ENCODE measurements at regions of chr6 and their contacts with region 1.

Region 1: DNA sequence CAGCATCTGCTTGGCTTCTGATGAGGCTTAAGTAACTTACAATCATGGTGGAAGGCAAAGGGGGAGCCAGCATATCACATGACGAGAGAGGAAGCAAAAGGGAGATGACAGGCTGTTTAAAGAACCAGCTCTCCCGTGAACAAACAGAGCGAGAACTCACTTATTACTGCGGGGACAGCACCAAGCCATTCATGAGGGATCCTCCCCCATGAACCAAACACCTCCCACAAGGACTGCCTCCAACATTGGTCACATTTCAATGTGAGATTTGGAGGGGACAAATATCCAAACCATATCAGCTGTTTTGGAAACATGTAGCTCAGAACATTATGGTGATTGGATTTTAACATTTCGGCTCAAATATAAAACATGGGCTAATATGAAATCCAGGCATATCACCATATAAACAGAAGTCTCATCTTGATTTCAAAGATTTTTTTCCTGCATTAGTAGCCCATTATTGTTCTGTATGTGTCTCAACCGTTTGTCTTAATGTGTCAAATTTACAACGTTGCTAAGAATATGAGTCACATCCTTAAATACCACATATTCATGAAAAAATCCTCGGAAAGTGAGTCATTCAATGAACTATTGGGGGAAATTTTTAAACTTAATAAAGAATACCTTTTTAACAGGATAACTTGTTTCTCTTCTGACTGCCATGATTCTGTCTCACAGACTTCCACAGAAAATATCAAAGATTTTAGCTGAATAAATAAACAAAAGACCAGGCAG is 894.3 kb downstream of the TFAP2A start:
- DNase-seq: peak; percentile 65
- H3K4me3 Mint-ChIP-seq: no peak overlapping the region
- H3K27ac Mint-ChIP-seq: peak overlapping the region; percentile 82
- H3K4me1 Mint-ChIP-seq: peaks cover 49% of the 10 kb centered on the region
- H3K27me3 Mint-ChIP-seq: no peaks in the 10 kb centered on the region
- CTCF ChIP-seq: no peak

Region 2: DNA sequence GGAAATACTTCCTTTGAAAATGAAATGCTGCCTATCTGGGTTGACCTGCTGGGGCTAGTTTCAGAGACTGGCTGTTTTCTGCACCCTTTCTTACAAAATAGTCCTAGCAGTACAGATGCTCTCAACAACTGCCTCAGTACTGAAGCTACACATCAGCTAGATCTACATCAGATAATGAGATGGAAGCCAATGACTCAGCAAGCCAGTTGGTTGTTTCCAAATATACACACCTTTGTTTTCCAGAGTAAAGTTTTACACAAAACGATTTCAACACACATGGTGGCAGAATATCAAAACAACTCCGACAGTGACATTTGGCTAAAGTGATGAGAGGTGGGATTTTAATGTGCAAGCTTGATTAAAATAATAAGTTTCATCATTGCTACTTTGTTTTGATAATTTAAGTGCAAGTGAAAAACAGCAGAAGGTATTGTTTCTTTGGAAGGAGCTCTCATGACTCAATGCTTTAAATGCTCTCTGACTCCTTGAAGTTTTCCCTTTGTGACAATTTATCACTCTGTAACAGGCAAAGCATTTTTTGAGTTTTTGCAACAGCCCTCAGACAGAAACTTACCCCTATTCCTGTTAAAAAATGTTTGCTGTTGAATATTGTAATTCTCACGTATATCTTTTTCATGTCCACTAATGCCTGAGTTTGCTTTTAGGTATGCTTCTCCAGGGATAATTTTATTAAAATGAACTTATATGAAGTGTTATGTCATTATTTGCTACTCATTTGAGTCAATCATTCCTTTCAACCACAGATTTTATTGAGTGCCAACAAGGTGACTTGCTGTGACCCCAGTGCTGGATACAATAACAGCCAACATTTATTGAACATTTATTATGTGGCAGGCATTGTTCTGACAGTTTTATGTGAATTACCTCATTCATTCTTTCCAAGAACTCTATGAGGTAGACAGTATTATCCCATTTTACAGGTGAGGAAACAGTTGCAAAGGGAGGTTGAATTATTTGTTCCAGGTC is 12.3 kb after region 1 on chr6:
- CTCF ChIA-PET with region 1: interaction called, 3 read pairs
- POLR2A ChIA-PET with region 1: interaction called, 10 read pairs
- intact Hi-C with region 1: no loop called
- DNase-seq: peak; percentile 79
- H3K4me3 Mint-ChIP-seq: no peak overlapping the region
- H3K27ac Mint-ChIP-seq: peak overlapping the region; percentile 17
- H3K4me1 Mint-ChIP-seq: peaks cover 10% of the 10 kb centered on the region
- H3K27me3 Mint-ChIP-seq: no peaks in the 10 kb centered on the region
- CTCF ChIP-seq: no peak

Measured in MCF 10A (cell line).